ENCODE measurements at regions of chr22 and their contacts with region 1.

Region 1: GRCh38 chr22:50498322-50498890 is 9.1 kb downstream of the LMF2 start:
- H3K4me3 Mint-ChIP-seq: no peak overlapping the region
- H3K27ac Mint-ChIP-seq: no peak overlapping the region
- H3K4me1 Mint-ChIP-seq: peaks cover 14% of the 10 kb centered on the region
- H3K27me3 Mint-ChIP-seq: peaks cover 21% of the 10 kb centered on the region

Region 2: GRCh38 chr22:50244420-50245213 is 253.8 kb before region 1 on chr22 and contains the start of gene TUBGCP6:
- intact Hi-C with region 1: loop called (anchors 5 kb)
- H3K4me3 Mint-ChIP-seq: peak within 1 kb of the TSS; percentile 97
- H3K27ac Mint-ChIP-seq: peak within 1 kb of the TSS; percentile 94
- H3K4me1 Mint-ChIP-seq: peaks cover 65% of the 10 kb centered on the region
- H3K27me3 Mint-ChIP-seq: no peaks in the 10 kb centered on the region

Region 3: GRCh38 chr22:50446708-50447575 is 51.5 kb before region 1 on chr22:
- intact Hi-C with region 1: no loop called
- H3K4me3 Mint-ChIP-seq: no peak overlapping the region
- H3K27ac Mint-ChIP-seq: no peak overlapping the region
- H3K4me1 Mint-ChIP-seq: peaks cover 8% of the 10 kb centered on the region
- H3K27me3 Mint-ChIP-seq: no peaks in the 10 kb centered on the region

Region 4: DNA sequence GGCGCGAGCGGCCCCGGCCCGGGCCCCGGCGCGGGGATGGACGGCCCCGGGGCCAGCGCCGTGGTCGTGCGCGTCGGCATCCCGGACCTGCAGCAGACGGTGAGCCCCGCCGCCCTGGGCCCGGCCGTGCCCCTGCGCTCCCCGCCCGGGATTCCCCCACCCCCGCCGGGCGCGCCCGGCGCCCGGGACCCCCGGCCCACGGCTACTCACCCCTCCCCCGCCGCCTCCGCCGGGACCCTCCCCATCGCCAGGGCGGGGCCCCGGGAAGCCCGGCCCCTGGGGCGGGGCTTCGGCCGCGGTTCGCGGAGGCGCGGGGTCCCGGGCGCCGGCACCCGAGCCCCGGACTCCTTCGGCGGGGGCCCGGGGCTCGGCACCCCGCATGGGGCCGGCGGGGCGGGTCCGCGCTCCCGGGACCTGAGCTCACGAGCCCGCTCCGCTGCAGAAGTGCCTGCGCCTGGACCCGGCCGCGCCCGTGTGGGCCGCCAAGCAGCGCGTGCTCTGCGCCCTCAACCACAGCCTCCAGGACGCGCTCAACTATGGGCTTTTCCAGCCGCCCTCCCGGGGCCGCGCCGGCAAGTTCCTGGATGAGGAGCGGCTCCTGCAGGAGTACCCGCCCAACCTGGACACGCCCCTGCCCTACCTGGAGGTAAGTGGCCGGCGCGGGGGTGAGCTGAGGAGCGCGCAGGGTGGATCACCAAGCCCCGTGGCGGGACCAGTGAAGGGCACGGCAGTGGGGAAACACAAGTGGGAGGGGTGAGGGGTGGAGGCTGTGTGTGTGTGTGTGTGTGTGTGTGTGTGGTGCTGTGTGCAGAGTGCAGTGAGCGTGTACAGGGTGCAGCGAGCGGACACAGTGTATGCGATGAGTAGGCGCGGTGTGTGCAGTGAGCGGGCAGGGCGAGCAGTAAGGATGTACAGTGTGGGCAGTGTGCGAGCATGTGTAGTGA is 176.5 kb after region 1 on chr22:
- intact Hi-C with region 1: no loop called
- H3K4me3 Mint-ChIP-seq: peak overlapping the region; percentile 60
- H3K27ac Mint-ChIP-seq: no peak overlapping the region
- H3K4me1 Mint-ChIP-seq: peaks cover 33% of the 10 kb centered on the region
- H3K27me3 Mint-ChIP-seq: peaks cover 68% of the 10 kb centered on the region

Measured in dendritic cell treated with granulocyte-macrophage colony-stimulating factor and Interleukin-4, amounts not matched to agents 40 ng/mL and 50 ng/mL, for 4 days (primary cell).